ENCODE measurements at regions of chr1 and their contacts with region 1.

Region 1: GRCh38 chr1:22969304-22969709 is 3.4 kb downstream of the LACTBL1 start:
- DNase-seq: peak; percentile 59
- H3K4me3 ChIP-seq: no peak overlapping the region
- H3K27ac ChIP-seq: no peak overlapping the region
- H3K4me1 ChIP-seq: no peaks in the 10 kb centered on the region
- H3K27me3 ChIP-seq: peaks cover 6% of the 10 kb centered on the region
- CTCF ChIP-seq: no peak

Region 2: GRCh38 chr1:22665752-22666151 is 303.6 kb before region 1 on chr1:
- CTCF ChIA-PET with region 1: no interaction called
- dilution Hi-C with region 1: no loop called
- in situ Hi-C with region 1: no loop called
- intact Hi-C with region 1: loop called (anchors 1 kb)
- DNase-seq: peak; percentile 5
- H3K4me3 ChIP-seq: no peak overlapping the region
- H3K27ac ChIP-seq: no peak overlapping the region
- H3K4me1 ChIP-seq: no peaks in the 10 kb centered on the region
- H3K27me3 ChIP-seq: no peaks in the 10 kb centered on the region
- CTCF ChIP-seq: peak; percentile 34 to 50

Region 3: GRCh38 chr1:22673486-22674409 is 295.6 kb before region 1 on chr1:
- CTCF ChIA-PET with region 1: no interaction called
- dilution Hi-C with region 1: no loop called
- in situ Hi-C with region 1: no loop called
- intact Hi-C with region 1: loop called (anchors 1 kb)
- DNase-seq: peak; percentile 39
- H3K4me3 ChIP-seq: no peak overlapping the region
- H3K27ac ChIP-seq: no peak overlapping the region
- H3K4me1 ChIP-seq: no peaks in the 10 kb centered on the region
- H3K27me3 ChIP-seq: no peaks in the 10 kb centered on the region
- CTCF ChIP-seq: peak; percentile 66 to 77

Region 4: DNA sequence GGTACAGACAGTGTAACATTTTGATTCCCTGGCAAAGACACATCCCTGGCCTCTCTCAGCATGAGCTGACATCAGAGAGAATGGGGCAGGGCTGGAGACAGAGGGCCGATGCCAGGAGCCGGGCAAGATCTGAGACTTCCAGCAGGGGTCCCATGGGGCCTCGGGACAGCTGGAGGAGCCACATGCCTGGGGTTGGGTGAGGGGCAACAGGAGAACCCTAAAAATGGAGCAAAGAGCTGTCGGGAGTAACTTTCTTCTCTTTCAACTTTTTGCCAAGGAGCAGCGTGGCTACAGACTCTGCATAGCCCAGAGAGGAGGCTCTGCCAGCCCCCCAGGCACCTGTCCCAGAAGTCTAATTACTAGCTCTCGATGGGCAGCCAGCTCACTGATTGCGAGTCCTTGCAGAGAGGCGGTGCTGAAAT is 127.4 kb before region 1 on chr1:
- CTCF ChIA-PET with region 1: no interaction called
- dilution Hi-C with region 1: no loop called
- in situ Hi-C with region 1: no loop called
- intact Hi-C with region 1: no loop called
- DNase-seq: no peak
- H3K4me3 ChIP-seq: no peak overlapping the region
- H3K27ac ChIP-seq: no peak overlapping the region
- H3K4me1 ChIP-seq: no peaks in the 10 kb centered on the region
- H3K27me3 ChIP-seq: no peaks in the 10 kb centered on the region
- CTCF ChIP-seq: no peak

Region 5: DNA sequence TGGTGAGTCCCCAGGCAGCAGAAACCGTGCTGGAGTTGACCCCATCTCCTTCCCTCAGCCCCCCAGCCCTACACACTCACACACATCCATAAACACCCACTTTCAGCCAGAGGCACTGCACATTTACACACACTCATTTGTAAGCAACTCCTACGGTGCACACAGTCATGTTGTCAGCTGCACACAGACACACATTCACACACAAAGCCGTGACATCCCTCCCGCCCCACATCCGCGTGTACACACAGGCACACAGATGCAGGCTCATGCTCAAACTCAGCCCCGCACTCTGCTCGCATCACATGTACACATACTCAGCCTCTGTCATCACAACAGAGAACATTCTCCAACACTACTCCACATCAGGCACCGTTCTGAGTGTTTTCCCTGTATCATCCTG is 44.2 kb before region 1 on chr1:
- CTCF ChIA-PET with region 1: no interaction called
- dilution Hi-C with region 1: loop called (anchors 5 kb)
- in situ Hi-C with region 1: no loop called
- intact Hi-C with region 1: no loop called
- DNase-seq: no peak
- H3K4me3 ChIP-seq: no peak overlapping the region
- H3K27ac ChIP-seq: no peak overlapping the region
- H3K4me1 ChIP-seq: no peaks in the 10 kb centered on the region
- H3K27me3 ChIP-seq: no peaks in the 10 kb centered on the region
- CTCF ChIP-seq: no peak

Region 6: DNA sequence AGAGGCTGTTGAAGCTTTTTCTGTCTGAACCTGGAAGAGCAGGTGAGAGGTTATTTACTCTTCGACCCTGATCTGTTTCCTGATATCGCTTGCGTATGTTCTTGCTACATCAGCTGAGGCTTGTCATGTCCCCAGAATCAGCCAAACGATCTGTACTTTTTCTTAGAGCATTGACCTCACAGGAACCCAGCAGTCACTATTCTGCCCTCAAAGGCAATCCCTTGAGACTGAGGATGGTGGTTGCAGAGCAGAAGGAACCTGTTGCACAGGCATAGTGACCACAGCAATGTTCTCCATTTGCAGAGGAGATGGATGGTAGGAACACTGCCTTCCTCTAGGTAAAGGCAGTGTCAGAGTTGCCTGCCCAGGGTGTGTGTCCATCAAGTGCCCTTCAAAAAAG is 14.6 kb after region 1 on chr1:
- CTCF ChIA-PET with region 1: no interaction called
- dilution Hi-C with region 1: no loop called
- in situ Hi-C with region 1: no loop called
- intact Hi-C with region 1: loop called (anchors 2 kb)
- DNase-seq: no peak
- H3K4me3 ChIP-seq: no peak overlapping the region
- H3K27ac ChIP-seq: no peak overlapping the region
- H3K4me1 ChIP-seq: no peaks in the 10 kb centered on the region
- H3K27me3 ChIP-seq: no peaks in the 10 kb centered on the region
- CTCF ChIP-seq: no peak

Region 7: DNA sequence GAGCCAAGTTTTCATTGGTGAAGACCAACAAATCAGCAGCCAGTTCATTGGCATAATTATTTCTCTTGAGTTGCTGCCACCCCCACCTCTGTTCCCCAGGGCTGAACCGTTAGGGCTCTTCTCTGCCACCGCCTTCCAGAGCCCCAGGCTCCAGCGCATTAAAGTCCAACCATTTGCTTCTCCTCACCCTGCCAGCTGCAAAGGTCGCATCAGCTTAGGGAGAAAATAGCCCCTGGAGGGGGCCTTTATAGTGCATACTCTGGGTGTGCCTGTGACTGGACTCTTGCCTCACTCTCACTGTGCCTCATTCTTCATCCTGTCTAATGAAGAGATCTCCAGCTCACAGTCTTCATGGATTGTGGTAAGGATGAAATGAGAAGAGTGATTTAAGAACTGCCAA is 100.4 kb after region 1 on chr1:
- CTCF ChIA-PET with region 1: no interaction called
- dilution Hi-C with region 1: loop called (anchors 5 kb)
- in situ Hi-C with region 1: loop called in 1 of 2 experiments (anchors 10 kb)
- intact Hi-C with region 1: no loop called
- DNase-seq: no peak
- H3K4me3 ChIP-seq: no peak overlapping the region
- H3K27ac ChIP-seq: no peak overlapping the region
- H3K4me1 ChIP-seq: no peaks in the 10 kb centered on the region
- H3K27me3 ChIP-seq: no peaks in the 10 kb centered on the region
- CTCF ChIP-seq: no peak